WTC11 (cell line): ENCODE measurements at regions of chr11 and their contacts with region 1.

Region 1: DNA sequence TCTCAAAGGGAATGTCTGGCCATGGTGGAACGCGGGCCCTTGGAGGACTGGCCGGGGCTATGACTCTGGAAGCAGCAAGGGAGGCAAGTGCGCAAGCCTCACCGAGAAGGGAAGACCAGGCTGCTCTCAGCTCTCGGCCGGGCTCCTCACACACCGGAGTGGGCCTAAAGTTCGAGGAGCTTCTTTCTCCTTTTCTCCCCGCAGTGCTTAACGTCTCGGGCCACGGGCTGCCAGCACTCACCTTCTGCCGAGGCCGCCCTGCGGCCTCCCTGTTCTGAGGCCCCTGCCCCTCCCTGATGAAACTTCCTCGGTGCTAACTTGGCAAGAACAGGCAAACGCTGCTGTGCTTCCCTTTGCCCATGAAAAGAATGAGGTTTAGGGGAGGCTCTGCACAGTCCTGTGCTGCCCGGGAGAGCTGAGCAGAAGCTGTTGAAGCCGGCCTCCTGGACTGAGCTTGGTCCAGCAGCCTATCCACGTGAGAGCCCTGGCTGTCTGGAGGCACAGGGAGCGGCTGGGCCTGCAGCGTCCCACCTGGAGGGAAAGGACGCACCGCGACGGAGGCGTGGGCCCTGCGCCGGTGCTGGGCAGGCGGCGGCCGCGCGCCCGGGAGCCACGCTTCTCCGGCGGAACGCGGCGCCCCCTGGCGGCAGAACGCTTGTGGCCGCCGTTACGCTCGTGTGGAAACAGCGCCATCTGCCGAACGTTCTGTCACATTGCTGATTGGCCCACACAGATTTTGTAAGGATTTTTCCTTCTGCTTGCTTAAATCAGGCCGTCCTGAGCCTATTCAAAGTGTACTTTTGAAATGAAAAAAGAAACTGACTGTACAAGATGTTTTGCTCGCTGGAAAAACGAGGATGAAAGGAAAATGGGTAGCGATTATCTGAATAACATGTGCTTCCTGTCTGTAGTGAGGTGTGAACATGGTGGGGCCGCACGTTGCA is 65.0 kb upstream of the TMEM45B start:
- DNase-seq: peak; percentile 74
- ATAC-seq: peak; percentile 94
- H3K4me3 Mint-ChIP-seq: peak overlapping the region; percentile 56
- H3K27ac Mint-ChIP-seq: no peak overlapping the region
- H3K4me1 Mint-ChIP-seq: no peaks in the 10 kb centered on the region
- H3K27me3 Mint-ChIP-seq: peaks cover 21% of the 10 kb centered on the region
- CTCF ChIP-seq: peak; percentile 100

Region 2: GRCh38 chr11:129364143-129364654 is 386.4 kb before region 1 on chr11:
- CTCF ChIA-PET with region 1: interaction called, 13 read pairs
- POLR2A ChIA-PET with region 1: no interaction called
- DNase-seq: peak; percentile 92
- ATAC-seq: peak; percentile 100
- H3K4me3 Mint-ChIP-seq: no peak overlapping the region
- H3K27ac Mint-ChIP-seq: no peak overlapping the region
- H3K4me1 Mint-ChIP-seq: 0 out of 2 replicates have a peak, but pooled peaks cover 4% of the 10 kb centered on the region
- H3K27me3 Mint-ChIP-seq: peaks cover 32% of the 10 kb centered on the region
- CTCF ChIP-seq: peak; percentile 90

Region 3: DNA sequence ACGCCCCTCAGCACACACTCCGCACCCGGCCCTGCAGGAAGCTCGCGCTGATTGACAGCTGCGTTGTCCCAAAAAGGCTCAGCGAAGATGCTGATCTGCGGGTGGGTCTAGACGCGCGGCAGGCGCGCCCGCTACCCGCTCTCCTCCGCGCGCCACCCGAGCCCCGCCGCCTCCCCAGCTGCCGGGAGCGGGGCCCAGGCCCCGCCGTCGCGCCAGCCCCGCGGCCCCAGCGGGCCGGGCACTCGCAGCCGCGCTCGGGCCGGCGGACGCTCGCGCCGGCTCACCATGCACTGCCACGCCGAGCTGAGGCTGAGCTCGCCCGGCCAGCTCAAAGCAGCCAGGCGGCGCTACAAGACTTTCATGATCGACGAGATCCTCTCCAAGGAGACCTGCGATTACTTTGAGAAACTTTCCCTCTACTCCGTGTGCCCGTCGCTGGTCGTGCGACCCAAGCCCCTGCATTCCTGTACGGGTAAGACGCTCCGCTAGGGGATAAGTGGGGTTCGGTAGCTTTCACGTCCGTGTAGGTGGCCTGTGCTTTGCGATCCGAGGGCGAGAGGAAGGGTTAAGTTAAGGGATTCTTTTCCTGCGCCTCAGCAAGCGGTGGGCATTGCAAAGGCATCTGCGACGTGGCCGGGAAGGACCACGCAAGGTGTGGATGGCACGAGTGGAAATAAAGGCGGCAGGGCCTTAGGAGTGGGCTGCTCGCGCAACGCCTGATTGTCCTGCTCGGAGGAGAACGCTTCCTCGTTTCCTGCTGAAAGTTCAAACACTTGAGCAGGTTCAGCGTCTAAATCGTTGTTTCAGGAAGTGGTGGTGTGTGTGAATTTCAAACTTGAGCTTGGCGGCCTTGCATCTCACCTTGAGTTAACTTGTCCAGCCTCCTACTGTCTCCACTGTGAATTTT is 374.6 kb before region 1 on chr11 and contains the start of gene BARX2:
- CTCF ChIA-PET with region 1: interaction called, 35 read pairs
- POLR2A ChIA-PET with region 1: no interaction called
- DNase-seq: peak; percentile 74
- ATAC-seq: peak; percentile 61
- H3K4me3 Mint-ChIP-seq: peak within 1 kb of the TSS; percentile 76
- H3K27ac Mint-ChIP-seq: no peak within 1 kb of the TSS
- H3K4me1 Mint-ChIP-seq: peaks cover 27% of the 10 kb centered on the region
- H3K27me3 Mint-ChIP-seq: peaks cover 88% of the 10 kb centered on the region
- CTCF ChIP-seq: no peak
- total RNA-seq, gene BARX2: not detected in 3 replicates

Region 4: DNA sequence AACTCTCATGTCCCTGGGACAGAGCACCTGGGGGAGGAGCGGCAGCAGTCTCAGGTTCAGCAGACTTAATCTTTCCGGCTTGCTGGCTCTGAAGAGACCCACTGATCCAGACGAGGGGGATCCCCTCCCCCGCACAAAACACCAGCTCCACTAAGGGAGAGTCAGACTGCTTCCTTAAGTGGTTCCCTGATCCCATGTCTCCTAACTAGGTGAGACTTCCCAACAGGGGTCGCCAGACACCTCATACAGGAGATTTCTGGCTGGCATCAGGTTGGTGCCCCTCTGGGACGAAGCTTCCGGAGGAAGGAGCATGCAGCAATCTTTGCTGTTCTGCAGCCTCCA is 92.1 kb before region 1 on chr11:
- CTCF ChIA-PET with region 1: interaction called, 10 read pairs
- POLR2A ChIA-PET with region 1: no interaction called
- DNase-seq: peak; percentile 47
- ATAC-seq: peak; percentile 95
- H3K4me3 Mint-ChIP-seq: no peak overlapping the region
- H3K27ac Mint-ChIP-seq: no peak overlapping the region
- H3K4me1 Mint-ChIP-seq: peaks cover 10% of the 10 kb centered on the region
- H3K27me3 Mint-ChIP-seq: no peaks in the 10 kb centered on the region; the same call in 1 of the 2 replicates
- CTCF ChIP-seq: no peak

Region 5: DNA sequence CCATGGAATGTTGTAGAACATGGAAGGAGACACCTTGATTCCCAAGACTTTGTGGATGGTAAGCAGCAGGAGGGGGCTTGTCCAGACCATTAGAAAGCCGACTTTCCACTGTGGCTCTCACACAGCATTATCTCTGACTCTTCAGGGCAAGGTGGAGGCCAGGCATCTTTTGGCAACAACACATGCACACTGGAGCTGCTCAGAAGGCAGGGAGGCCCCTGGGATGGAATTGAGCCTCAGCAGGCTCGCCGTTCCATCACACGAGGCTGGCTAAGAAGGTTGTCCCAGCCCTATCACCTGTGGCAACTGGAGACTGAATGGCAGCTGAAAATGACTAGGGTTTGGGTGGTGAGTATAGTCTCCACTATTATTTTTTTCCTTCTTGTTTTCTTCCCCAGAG is 11.3 kb before region 1 on chr11:
- CTCF ChIA-PET with region 1: no interaction called
- POLR2A ChIA-PET with region 1: no interaction called
- DNase-seq: no peak
- ATAC-seq: no peak
- H3K4me3 Mint-ChIP-seq: no peak overlapping the region
- H3K27ac Mint-ChIP-seq: no peak overlapping the region
- H3K4me1 Mint-ChIP-seq: peaks cover 12% of the 10 kb centered on the region
- H3K27me3 Mint-ChIP-seq: no peaks in the 10 kb centered on the region
- CTCF ChIP-seq: no peak